ENCODE measurements at regions of chr12 and their contacts with region 1.

Region 1: DNA sequence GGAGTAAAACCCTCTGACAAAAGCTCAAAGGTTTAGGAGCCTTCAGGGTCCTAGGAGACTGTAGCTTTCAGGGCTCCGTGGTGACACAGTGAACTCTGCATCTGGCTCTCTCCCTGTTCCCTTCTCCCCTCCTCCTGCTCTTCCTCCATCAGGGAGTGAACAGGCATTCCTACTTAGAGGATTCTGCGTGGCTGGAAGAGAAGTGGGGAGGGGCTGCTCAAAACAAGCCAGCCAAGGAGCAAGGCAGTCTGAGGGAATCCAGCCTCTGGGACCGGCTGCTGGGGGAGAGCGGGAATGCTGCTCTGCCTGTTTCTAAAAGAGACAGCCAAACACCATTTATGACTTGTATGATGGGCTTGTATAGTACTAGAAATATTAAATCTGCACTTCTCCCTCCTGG is 49.5 kb downstream of the RBMS2 start:
- DNase-seq: no peak
- H3K4me3 ChIP-seq: no peak overlapping the region
- H3K27me3 ChIP-seq: no peaks in the 10 kb centered on the region
- CTCF ChIP-seq: no peak

Region 2: DNA sequence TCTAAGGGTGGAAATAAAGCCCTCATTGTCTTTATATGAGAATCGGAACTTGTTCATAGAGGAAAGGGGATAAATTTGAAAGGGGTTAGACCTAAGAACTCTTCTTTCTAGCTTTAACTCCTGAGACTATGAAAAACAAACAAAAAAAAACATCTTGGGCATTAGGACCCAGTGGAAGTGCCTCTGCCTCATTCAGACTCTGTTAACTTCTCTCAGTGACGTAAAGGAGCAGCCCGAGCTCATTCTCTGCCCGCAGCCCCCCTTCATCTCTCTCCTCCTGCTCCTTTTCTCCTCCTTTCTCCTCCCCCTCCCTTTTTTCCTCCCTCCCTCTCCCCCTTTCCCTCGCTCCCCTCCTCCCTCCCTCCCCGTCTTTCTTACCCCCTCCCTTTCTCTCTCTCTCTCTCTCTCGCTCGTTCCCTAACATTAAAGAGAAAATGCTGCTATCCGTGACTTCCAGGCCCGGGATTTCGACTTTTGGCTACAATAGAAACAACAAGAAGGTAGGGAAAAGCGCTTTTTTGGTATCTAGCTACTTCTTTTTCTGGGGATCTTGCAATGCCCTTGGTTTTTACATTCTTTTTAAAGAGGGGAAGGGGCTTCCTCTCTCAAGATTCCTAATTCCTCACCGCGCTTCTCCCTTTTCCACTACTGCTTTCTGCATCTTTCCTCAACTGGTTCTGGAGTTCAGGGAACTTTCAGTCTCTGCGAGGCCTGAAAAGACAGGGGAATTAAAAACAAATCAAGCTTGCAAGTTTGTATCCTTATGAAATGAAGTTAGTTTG is 49.3 kb before region 1 on chr12 and contains the start of gene RBMS2:
- CTCF ChIA-PET with region 1: interaction called, 87 read pairs
- POLR2A ChIA-PET with region 1: interaction called, 4 read pairs
- DNase-seq: peak; percentile 77
- H3K4me3 ChIP-seq: peak within 1 kb of the TSS; percentile 49
- H3K27me3 ChIP-seq: no peaks in the 10 kb centered on the region
- CTCF ChIP-seq: no peak
- polyA plus RNA-seq, gene RBMS2: 67.9 and 68.4 TPM in 2 replicates